AG04450 (cell line): ENCODE measurements at regions of chr4 and their contacts with region 1.

Region 1: GRCh38 chr4:180664766-180665368 is 1578.3 kb upstream of the TENM3 start:
- DNase-seq: peak; percentile 85
- H3K4me3 ChIP-seq: no peak overlapping the region
- H3K27ac ChIP-seq: no peak overlapping the region
- H3K27me3 ChIP-seq: no peaks in the 10 kb centered on the region
- CTCF ChIP-seq: peak; percentile 88

Region 2: GRCh38 chr4:179671609-179672008 is 993.3 kb before region 1 on chr4:
- CTCF ChIA-PET with region 1: no interaction called
- POLR2A ChIA-PET with region 1: no interaction called
- DNase-seq: no peak
- H3K4me3 ChIP-seq: no peak overlapping the region
- H3K27ac ChIP-seq: no peak overlapping the region
- H3K27me3 ChIP-seq: no peaks in the 10 kb centered on the region
- CTCF ChIP-seq: no peak

Region 3: GRCh38 chr4:180641495-180641894 is 23.4 kb before region 1 on chr4:
- CTCF ChIA-PET with region 1: interaction called, 17 read pairs
- POLR2A ChIA-PET with region 1: no interaction called
- DNase-seq: no peak
- H3K4me3 ChIP-seq: no peak overlapping the region
- H3K27ac ChIP-seq: no peak overlapping the region
- H3K27me3 ChIP-seq: no peaks in the 10 kb centered on the region
- CTCF ChIP-seq: no peak

Region 4: GRCh38 chr4:180680305-180680704 is 15.4 kb after region 1 on chr4:
- CTCF ChIA-PET with region 1: interaction called, 31 read pairs
- POLR2A ChIA-PET with region 1: no interaction called
- DNase-seq: no peak
- H3K4me3 ChIP-seq: no peak overlapping the region
- H3K27ac ChIP-seq: no peak overlapping the region
- H3K27me3 ChIP-seq: no peaks in the 10 kb centered on the region
- CTCF ChIP-seq: no peak

Region 5: GRCh38 chr4:180784940-180785339 is 120.1 kb after region 1 on chr4:
- CTCF ChIA-PET with region 1: interaction called, 12 read pairs
- POLR2A ChIA-PET with region 1: no interaction called
- DNase-seq: no peak
- H3K4me3 ChIP-seq: no peak overlapping the region
- H3K27ac ChIP-seq: no peak overlapping the region
- H3K27me3 ChIP-seq: no peaks in the 10 kb centered on the region
- CTCF ChIP-seq: no peak

Region 6: DNA sequence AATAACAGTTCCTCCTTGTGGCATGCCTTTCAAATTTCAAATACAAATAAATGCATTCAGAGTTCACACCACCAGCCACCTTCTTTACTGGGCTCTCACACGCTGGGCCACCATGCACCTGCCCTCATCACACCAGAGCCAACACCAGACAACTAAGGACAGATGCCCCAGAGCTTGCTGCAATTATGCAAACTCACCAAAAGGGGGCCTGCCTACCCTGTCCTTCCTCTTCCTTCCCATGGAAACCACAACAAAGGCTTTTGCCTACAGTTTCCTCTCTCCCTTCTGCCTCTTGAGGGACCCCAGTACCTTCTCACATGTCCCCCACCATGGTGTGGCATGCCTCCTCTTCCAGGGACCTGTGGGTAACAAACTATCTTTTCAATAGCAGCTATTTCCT is 244.4 kb after region 1 on chr4:
- CTCF ChIA-PET with region 1: interaction called, 18 read pairs
- POLR2A ChIA-PET with region 1: no interaction called
- DNase-seq: no peak
- H3K4me3 ChIP-seq: no peak overlapping the region
- H3K27ac ChIP-seq: no peak overlapping the region
- H3K27me3 ChIP-seq: no peaks in the 10 kb centered on the region
- CTCF ChIP-seq: peak; percentile 63

Region 7: DNA sequence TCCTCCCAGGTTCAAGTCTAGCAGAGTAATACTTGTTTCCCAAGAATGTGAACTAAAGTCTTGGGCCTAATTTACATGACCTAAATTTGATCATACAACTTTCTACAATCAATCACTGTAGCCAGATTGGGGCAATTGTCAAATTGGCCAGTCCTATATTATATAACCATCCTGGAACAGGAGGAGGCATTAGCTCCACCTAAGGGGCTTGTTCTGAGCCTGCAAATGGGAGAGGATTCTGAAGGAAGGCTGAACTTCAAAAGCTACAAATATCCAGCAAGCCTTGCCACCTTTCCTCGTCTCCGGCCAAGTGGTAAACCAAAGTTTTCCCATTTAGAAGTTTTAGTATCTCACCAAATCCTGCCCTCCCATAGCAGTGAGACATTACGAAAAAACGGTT is 288.7 kb after region 1 on chr4:
- CTCF ChIA-PET with region 1: interaction called, 56 read pairs
- POLR2A ChIA-PET with region 1: no interaction called
- DNase-seq: no peak
- H3K4me3 ChIP-seq: no peak overlapping the region
- H3K27ac ChIP-seq: no peak overlapping the region
- H3K27me3 ChIP-seq: no peaks in the 10 kb centered on the region
- CTCF ChIP-seq: peak; percentile 56

Region 8: GRCh38 chr4:181261279-181261678 is 596.4 kb after region 1 on chr4:
- CTCF ChIA-PET with region 1: no interaction called
- POLR2A ChIA-PET with region 1: no interaction called
- DNase-seq: peak; percentile 3
- H3K4me3 ChIP-seq: no peak overlapping the region
- H3K27ac ChIP-seq: no peak overlapping the region
- H3K27me3 ChIP-seq: no peaks in the 10 kb centered on the region
- CTCF ChIP-seq: peak; percentile 61